A549 (cell line): ENCODE measurements at regions of chr17 and their contacts with region 1.

Region 1: DNA sequence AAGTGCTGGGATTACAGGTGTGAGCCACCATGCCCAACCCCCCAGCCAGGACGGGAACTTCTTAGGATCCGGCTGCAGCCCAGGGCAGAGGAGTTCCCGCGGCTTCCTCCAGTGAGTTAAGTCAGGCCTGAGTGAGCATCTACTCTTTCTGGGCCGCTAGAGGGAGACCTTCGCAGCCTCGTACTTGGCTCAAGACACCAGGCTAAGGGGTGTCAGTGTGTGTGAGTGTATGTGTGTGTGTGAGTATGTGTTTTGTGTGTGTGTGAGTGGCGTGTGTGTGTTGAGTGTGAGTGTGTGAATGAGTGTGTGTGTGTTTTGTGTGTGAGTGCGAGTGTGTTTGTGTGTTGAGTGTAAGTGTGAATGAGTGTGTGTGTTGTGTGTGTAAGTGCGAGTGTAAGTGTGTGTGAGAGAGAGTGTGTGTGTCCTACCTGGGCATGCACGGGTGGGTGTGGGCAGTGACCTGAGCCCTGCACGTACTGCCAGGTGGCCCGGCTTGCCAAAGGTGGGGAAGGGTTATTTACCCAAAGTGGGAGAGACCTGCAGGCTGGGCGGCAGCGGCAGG is 58.5 kb downstream of the TMEM235 start:
- DNase-seq: peak; percentile 85 to 94
- ATAC-seq: peak; percentile 96 to 98
- H3K4me3 ChIP-seq: no peak overlapping the region
- H3K27ac ChIP-seq: peak overlapping the region in 1 of 2 experiments; percentile 59; a peak in 2 of 6 replicates
- H3K4me1 ChIP-seq: peaks cover 4% of the 10 kb centered on the region; the same call in 2 of the 3 replicates
- CTCF ChIP-seq: peak; percentile 85
- EP300 ChIP-seq: no peak
- POLR2A ChIP-seq: no peak
- RAD21 ChIP-seq: peak; percentile 90 to 96

Region 2: GRCh38 chr17:78179372-78179771 is 110.5 kb before region 1 on chr17:
- CTCF ChIA-PET with region 1: no interaction called
- POLR2A ChIA-PET with region 1: no interaction called
- DNase-seq: no peak
- ATAC-seq: peak; percentile 10; a peak in 3 of 6 replicates
- H3K4me3 ChIP-seq: no peak overlapping the region
- H3K27ac ChIP-seq: peak overlapping the region in 1 of 2 experiments; percentile 48; a peak in 2 of 6 replicates
- H3K4me1 ChIP-seq: peaks cover 20% of the 10 kb centered on the region
- CTCF ChIP-seq: no peak
- EP300 ChIP-seq: no peak
- POLR2A ChIP-seq: no peak
- RAD21 ChIP-seq: no peak

Region 3: GRCh38 chr17:78300962-78301822 is 11.3 kb after region 1 on chr17:
- CTCF ChIA-PET with region 1: interaction called, 249 read pairs
- POLR2A ChIA-PET with region 1: no interaction called
- DNase-seq: peak in 1 of 2 experiments; percentile 39
- ATAC-seq: peak; percentile 32 to 64; a peak in 3 of 6 replicates
- H3K4me3 ChIP-seq: no peak overlapping the region
- H3K27ac ChIP-seq: peak overlapping the region; percentile 13 to 38; a peak in 5 of 6 replicates
- H3K4me1 ChIP-seq: peaks cover 17% of the 10 kb centered on the region
- CTCF ChIP-seq: no peak
- EP300 ChIP-seq: no peak
- POLR2A ChIP-seq: no peak
- RAD21 ChIP-seq: no peak

Region 4: GRCh38 chr17:78313735-78314648 is 24.1 kb after region 1 on chr17:
- CTCF ChIA-PET with region 1: interaction called, 249 read pairs
- POLR2A ChIA-PET with region 1: interaction called, 3 read pairs
- DNase-seq: peak; percentile 95 to 98
- ATAC-seq: peak; percentile 63 to 72
- H3K4me3 ChIP-seq: peak overlapping the region; percentile 42
- H3K27ac ChIP-seq: peak overlapping the region; percentile 94 to 95
- H3K4me1 ChIP-seq: peaks cover 57% of the 10 kb centered on the region
- CTCF ChIP-seq: no peak; the same call in 2 of the 3 replicates
- EP300 ChIP-seq: peak; percentile 31 to 57; a peak in 2 of 5 replicates
- POLR2A ChIP-seq: peak; percentile 64
- RAD21 ChIP-seq: peak in 1 of 2 experiments; percentile 50; a peak in 4 of 5 replicates

Region 5: DNA sequence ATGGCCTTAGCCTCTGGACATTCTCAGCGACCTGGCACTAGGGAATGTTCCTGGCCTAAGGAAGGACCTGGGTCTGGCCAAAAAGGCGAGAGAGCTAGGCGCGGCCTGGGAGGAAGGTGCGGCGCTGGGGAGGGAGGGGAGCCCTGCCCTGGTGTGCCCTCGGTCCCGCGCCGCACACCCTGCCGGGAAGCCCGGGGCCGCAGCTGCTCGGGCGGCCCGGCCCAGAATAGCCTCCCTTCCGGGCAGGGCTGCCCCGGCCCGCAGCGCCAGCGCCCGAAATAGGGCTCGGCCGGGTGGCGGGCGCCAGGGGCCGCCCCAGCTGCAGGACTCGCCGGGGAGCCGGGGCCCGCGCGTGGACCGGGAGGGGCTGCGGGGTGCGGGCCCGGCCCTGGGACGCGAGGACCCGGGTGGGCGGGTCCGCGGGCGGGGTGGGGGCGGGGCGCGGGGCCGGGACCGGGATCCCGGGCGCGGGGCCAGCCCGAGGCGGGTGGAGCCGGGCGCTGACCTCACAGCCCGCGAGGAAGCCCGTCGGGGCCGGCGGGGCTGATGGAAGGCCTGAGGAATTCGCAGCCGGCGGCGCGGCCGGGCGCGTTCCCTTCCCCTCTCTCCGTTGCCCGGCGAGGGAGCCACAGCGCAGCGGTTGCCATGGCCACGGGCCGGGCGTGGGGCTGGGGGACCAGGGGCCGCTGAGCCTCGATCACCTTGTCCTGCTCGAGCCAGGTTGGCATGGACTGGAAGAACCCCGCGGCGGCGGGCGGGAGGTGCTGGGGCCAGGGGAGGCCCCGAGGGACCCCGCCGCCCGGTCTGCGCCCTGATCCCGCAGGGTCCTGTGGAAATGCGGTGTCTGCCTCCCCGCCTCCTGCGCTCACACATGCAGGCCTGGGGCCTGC is 51.9 kb after region 1 on chr17:
- CTCF ChIA-PET with region 1: interaction called, 39 read pairs
- POLR2A ChIA-PET with region 1: no interaction called
- DNase-seq: peak; percentile 77 to 83
- ATAC-seq: peak; percentile 58 to 61
- H3K4me3 ChIP-seq: peak overlapping the region; percentile 53
- H3K27ac ChIP-seq: peak overlapping the region; percentile 91 to 97
- H3K4me1 ChIP-seq: peaks cover 74% of the 10 kb centered on the region
- CTCF ChIP-seq: no peak; the same call in 2 of the 3 replicates
- EP300 ChIP-seq: no peak
- POLR2A ChIP-seq: peak; percentile 22; the same call in 1 of the 2 replicates
- RAD21 ChIP-seq: peak in 1 of 2 experiments; percentile 10; a peak in 1 of 5 replicates

Region 6: DNA sequence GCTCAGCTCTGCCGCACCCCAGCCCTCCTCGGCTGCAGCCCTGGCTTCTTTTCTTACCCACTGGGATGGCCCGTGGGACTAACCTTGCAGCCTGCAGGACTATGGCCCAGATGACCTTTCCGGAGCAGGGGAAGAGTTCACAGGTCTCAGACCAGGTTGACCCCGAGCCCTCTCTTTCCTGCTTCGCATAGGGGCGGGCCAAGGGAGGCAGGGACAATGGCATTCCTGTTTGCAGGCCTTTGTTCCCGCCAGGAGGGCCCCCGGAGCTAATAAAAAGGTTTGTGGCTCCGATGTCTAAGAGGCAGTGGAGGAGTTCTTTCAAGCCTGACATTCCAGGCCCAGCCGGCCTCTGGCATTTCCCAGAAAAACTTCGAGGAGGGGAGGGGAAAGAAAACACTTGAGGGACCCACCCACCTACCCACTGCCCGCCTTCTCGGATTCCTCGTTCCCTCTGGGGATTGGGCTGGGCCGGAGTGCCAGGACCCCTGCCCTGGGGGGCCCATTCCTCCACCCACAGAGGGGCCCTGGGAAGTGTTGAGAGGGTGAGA is 75.8 kb after region 1 on chr17:
- CTCF ChIA-PET with region 1: interaction called, 119 read pairs
- POLR2A ChIA-PET with region 1: interaction called, 5 read pairs
- DNase-seq: no peak
- ATAC-seq: no peak
- H3K4me3 ChIP-seq: no peak overlapping the region
- H3K27ac ChIP-seq: peak overlapping the region in 1 of 2 experiments; percentile 31; a peak in 2 of 6 replicates
- H3K4me1 ChIP-seq: peaks cover 4% of the 10 kb centered on the region
- CTCF ChIP-seq: no peak
- EP300 ChIP-seq: no peak
- POLR2A ChIP-seq: no peak
- RAD21 ChIP-seq: no peak

Region 7: GRCh38 chr17:78438271-78438691 is 148.4 kb after region 1 on chr17:
- CTCF ChIA-PET with region 1: no interaction called
- POLR2A ChIA-PET with region 1: no interaction called
- DNase-seq: no peak
- ATAC-seq: peak in 1 of 2 experiments; percentile 4; a peak in 2 of 6 replicates
- H3K4me3 ChIP-seq: no peak overlapping the region
- H3K27ac ChIP-seq: no peak overlapping the region
- H3K4me1 ChIP-seq: 0 out of 3 replicates have a peak, but pooled peaks cover 3% of the 10 kb centered on the region
- CTCF ChIP-seq: no peak
- EP300 ChIP-seq: no peak
- POLR2A ChIP-seq: no peak
- RAD21 ChIP-seq: no peak